Naive thymus-derived CD8-positive, alpha-beta T cell (primary cell): ENCODE measurements at regions of chr17 and their contacts with region 1.

Region 1: DNA sequence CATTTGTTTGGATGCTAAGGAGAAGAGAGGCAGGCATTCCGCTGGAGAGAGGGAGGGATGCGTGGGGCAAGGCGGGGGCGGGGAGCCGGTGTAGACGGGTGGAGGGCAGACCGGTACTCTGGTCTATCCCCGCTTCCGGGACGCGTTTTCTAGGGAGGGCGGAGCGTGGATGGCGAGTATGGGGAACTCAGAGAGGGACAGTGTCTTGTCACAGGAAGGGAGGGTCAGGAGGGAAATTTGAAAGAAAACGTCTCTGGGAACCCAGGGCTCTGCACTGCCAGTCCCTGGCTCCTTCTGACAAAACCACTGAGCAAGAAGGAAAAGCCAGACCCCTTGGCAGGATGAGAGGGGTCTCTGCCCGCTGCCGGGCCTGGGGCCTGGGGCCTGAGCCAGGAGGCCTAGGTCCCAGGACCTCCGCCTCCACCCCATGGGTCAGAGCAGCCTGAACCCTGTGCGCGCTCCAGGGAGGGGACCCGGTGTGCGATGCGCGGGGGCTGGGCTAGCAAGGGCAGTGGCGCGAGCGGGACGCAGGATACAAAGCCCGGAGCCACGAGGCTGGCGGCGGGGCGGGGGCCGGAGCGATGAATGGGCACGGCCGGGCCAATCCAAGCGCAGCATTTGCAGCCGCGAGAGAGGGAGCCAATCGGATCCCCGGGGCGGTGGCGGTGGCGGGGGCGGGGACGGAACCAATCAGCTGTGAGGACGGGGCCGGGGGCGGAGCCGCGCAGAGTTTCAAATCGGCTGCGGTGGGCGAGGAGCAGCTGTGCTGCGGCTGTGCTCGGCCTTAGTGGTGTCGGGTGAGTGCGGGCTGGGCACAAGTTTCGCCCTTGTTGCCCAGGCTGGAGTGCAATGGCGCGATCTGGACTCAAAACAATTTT is at the start of gene PIMREG:
- DNase-seq: peak; percentile 81 to 94 (median 84)
- ATAC-seq: peak; percentile 95 to 98
- H3K4me3 Mint-ChIP-seq: peak within 1 kb of the TSS; percentile 82 to 96 (median 94)
- H3K27ac Mint-ChIP-seq: peak within 1 kb of the TSS; percentile 68 to 93 (median 85)
- H3K4me1 Mint-ChIP-seq: peaks cover 10 to 16% (median 12%) of the 10 kb centered on the region in 4 donors
- H3K27me3 Mint-ChIP-seq: peaks cover 0 to 12% (median 7%) of the 10 kb centered on the region in 5 donors
- polyA plus RNA-seq, gene PIMREG: 0.27 TPM in 1 of 3 donors, not detected in the others

Region 2: DNA sequence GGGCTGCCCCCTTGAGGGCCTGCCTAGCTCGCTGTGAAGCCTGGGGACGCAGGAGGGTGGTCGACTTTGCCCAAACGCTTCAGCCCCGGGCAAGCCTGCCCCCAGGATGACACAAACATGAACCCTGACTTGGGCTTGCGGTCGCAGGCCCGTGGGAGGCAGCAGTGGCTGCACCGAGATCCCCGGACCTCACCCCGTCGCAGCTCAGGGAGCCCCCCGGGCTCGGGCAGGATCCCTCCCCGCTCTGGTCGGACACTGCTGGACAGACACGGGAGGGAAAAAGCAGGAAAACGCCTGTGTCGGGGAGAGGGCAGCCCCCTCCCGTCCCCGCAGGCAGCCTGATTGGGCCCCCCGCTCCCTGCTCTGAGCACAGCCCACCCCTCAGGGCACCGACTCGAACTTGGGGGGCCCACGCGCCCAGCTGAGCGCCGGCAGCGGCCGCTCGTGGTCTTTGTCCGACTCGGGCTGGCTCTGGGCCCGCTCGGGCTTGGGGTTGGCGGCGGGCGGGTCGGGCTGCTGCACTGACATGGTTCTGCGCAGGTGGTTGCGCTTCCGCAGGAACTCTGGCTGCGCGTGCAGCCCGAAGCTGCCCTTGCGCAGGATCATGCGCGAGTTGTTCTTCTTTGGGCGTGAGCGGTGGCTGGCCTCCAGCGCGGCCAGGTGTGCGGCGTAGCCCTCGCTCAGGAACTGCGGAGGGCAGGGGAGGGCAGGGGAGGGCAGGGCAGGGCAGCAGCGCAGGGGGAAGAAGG is 11.2 kb after region 1 on chr17:
- POLR2A ChIA-PET with region 1: interaction called, 17 read pairs
- DNase-seq: peak; percentile 4 to 72 (median 38)
- ATAC-seq: peak; percentile 92 to 99
- H3K4me3 Mint-ChIP-seq: peak overlapping the region; percentile 53 to 82 (median 68)
- H3K27ac Mint-ChIP-seq: peak overlapping the region in 7 of 10 donors; percentile 53 to 91 (median 71)
- H3K4me1 Mint-ChIP-seq: peaks cover 16 to 29% (median 22%) of the 10 kb centered on the region in 4 donors
- H3K27me3 Mint-ChIP-seq: peaks cover 0 to 1% (median 0%) of the 10 kb centered on the region in 5 donors